ENCODE measurements at regions of chr20 and their contacts with region 1.

Region 1: GRCh38 chr20:16407251-16408067 is 165.8 kb downstream of the KIF16B start:
- DNase-seq: peak; percentile 86 to 94
- H3K4me3 ChIP-seq: no peak overlapping the region
- H3K4me3 Mint-ChIP-seq: peak overlapping the region; percentile 61
- H3K27ac Mint-ChIP-seq: peak overlapping the region; percentile 57
- H3K4me1 ChIP-seq: peaks cover 36% of the 10 kb centered on the region
- H3K4me1 Mint-ChIP-seq: peaks cover 23% of the 10 kb centered on the region
- H3K27me3 ChIP-seq: no peaks in the 10 kb centered on the region
- H3K27me3 Mint-ChIP-seq: no peaks in the 10 kb centered on the region
- CTCF ChIP-seq: no peak

Region 2: DNA sequence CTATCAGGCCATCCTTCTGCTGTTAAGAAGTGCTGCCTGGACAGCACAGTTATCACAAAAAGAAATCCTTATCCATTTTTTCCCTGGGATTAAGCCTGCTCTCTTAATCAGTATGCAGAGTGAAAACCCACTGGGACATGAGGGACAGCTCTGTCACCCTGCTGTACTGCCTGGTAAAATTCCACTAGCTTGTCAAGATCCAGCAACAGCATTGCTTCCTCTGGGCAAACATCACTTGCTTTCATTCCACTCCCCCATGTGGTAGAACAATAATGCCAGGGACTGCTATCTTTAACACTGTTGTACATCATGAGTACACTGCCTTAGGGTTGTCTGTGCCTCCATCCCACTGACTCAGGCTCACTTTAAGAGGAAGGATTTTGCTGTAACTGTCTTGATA is 165.5 kb before region 1 on chr20:
- CTCF ChIA-PET with region 1: no interaction called
- POLR2A ChIA-PET with region 1: no interaction called
- intact Hi-C with region 1: no loop called
- DNase-seq: peak in 1 of 2 experiments; percentile 30
- H3K4me3 ChIP-seq: no peak overlapping the region
- H3K4me3 Mint-ChIP-seq: no peak overlapping the region
- H3K27ac Mint-ChIP-seq: no peak overlapping the region
- H3K4me1 ChIP-seq: no peaks in the 10 kb centered on the region
- H3K4me1 Mint-ChIP-seq: peaks cover 6% of the 10 kb centered on the region
- H3K27me3 ChIP-seq: no peaks in the 10 kb centered on the region
- H3K27me3 Mint-ChIP-seq: no peaks in the 10 kb centered on the region
- CTCF ChIP-seq: peak in 1 of 2 experiments; percentile 17

Region 3: DNA sequence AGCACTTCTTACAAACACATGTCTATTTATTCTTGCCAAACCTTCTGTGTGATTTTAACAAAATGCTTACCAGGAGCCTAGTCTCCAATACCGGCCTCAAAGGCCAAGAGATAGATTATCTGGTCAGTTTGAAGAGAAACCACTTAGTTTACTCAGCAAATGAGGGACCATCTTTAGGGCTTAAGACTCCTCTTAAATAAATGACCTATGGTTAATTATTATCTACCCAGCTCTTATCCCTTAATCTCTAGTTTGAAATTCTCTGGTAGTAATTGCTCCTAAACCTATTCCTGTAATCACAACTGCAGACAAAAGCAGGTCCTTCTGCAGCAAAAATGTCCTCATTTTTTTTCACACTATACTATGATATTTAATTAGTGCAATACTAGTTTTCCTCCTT is 136.0 kb before region 1 on chr20:
- CTCF ChIA-PET with region 1: no interaction called
- POLR2A ChIA-PET with region 1: no interaction called
- intact Hi-C with region 1: loop called (anchors 2 kb)
- DNase-seq: peak in 1 of 2 experiments; percentile 53
- H3K4me3 ChIP-seq: no peak overlapping the region
- H3K4me3 Mint-ChIP-seq: no peak overlapping the region
- H3K27ac Mint-ChIP-seq: no peak overlapping the region
- H3K4me1 ChIP-seq: peaks cover 18% of the 10 kb centered on the region
- H3K4me1 Mint-ChIP-seq: peaks cover 18% of the 10 kb centered on the region
- H3K27me3 ChIP-seq: no peaks in the 10 kb centered on the region
- H3K27me3 Mint-ChIP-seq: no peaks in the 10 kb centered on the region
- CTCF ChIP-seq: no peak

Region 4: DNA sequence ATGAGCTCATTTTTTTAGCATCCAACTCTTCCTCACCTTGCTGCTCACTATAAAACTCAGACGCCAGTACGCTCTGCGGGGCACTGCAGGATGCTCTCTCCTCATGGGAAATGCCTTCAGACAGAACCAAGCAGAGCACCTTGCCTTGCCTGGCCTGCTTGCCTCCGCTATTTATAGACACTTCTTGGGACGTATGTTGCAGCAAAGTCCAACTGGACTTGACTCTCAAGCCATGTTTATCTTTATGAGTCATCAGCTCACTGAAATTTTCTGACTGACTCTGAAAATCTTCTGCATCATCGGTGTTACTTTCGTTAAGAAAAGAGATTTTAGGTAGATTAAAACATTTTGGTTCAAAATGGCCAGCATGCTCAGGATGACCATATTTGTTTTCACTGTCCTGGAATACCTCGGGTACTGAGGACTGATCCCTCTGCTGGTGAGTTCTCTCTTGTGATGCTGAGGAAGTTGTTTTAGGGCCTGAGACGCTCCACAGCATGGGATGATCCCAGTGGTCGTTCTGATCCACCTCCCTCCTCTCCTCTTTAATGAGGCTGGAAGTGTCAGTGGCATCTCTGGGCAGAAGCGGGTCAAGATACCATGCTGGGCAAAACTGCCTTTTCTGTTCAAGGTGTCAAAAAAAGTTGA is 38.7 kb before region 1 on chr20:
- CTCF ChIA-PET with region 1: interaction called, 3 read pairs
- POLR2A ChIA-PET with region 1: no interaction called
- intact Hi-C with region 1: loop called (anchors 5 kb)
- DNase-seq: peak; percentile 23 to 52
- H3K4me3 ChIP-seq: no peak overlapping the region
- H3K4me3 Mint-ChIP-seq: peak overlapping the region; percentile 42
- H3K27ac Mint-ChIP-seq: peak overlapping the region; percentile 83
- H3K4me1 ChIP-seq: peaks cover 15% of the 10 kb centered on the region
- H3K4me1 Mint-ChIP-seq: peaks cover 11% of the 10 kb centered on the region
- H3K27me3 ChIP-seq: no peaks in the 10 kb centered on the region
- H3K27me3 Mint-ChIP-seq: no peaks in the 10 kb centered on the region
- CTCF ChIP-seq: peak in 1 of 2 experiments; percentile 31